WTC11 (cell line): ENCODE measurements at regions of chr5 and their contacts with region 1.

Region 1: DNA sequence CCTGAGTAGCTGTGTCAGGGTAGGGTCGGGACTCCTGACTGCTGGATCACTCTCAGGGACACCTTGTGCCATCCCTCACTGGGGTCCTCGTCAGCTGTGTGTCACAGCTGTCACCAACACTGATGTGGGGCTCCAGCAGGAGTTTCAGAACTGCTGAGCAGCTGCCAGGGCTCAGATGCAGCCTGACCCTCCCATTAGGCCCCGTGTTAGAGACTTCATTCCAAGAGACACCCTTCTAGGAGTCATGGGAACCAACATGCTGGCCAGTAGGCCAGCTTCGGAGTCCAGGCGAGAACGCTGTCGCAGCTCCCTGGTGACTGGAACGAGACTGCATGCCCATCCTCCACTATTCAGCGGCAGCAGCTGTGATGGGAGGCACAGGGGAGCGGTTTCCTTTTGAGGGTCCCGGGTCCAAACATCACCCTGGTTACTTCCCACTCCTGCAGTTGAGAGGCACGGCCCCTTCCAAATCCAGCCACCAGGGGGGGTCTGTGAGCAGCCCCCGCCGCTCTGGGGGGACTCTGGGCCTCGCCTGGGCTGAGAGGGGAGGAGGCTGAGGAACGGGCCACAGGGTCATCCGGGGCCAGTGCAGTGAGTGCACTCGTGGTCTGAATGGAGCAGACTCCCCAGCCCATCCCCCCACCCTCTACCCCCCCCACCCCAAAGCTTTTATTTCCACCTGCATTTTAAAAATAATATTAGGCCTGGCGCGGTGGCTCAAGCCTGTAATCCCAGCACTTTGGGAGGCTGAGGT is 12.6 kb upstream of the TCF7 start:
- DNase-seq: peak; percentile 87
- ATAC-seq: peak; percentile 73
- H3K4me3 Mint-ChIP-seq: no peak overlapping the region; the same call in 1 of the 2 replicates
- H3K27ac Mint-ChIP-seq: no peak overlapping the region
- H3K4me1 Mint-ChIP-seq: peaks cover 48% of the 10 kb centered on the region
- H3K27me3 Mint-ChIP-seq: peaks cover 52% of the 10 kb centered on the region
- CTCF ChIP-seq: peak; percentile 85

Region 2: DNA sequence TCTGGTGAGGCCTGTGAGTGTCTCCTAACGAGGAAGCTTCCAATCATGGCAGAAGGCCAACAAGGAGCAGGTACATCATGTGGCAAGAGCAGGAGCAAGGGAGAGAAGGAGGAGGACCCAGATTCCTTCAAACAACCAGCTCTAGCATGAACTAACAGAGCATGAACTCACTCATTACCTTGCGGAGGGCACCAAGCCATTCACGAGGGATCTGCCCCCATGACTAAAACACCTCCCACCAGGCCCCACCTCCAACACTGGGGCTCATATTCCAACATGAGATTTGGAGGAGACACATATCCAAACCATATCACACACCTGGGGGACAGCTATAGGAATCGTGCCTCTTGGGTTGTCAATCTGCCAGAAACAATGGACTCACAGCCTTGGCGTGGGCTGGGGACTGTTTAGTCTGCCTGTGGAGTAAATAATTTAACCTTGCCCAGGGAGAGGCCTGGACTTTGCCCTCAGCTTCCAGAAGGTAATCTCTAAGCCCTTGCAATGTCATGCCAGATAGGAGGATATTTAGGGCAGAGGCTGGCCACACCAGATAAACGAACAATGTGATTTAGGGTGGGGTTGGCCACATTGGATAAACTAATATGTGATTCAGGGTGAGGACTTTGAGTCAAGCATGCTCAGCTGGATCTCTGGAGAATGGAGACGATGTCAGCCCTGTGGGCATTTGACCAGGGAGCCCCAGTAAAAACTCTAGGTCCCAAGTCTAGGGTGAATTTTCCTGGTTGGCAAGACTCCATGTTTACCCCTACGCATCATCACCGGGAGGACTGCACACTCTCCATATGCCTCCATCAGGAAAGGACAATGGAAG is 83.5 kb before region 1 on chr5:
- CTCF ChIA-PET with region 1: no interaction called
- POLR2A ChIA-PET with region 1: no interaction called
- DNase-seq: no peak
- ATAC-seq: no peak
- H3K4me3 Mint-ChIP-seq: no peak overlapping the region
- H3K27ac Mint-ChIP-seq: no peak overlapping the region
- H3K4me1 Mint-ChIP-seq: peaks cover 10% of the 10 kb centered on the region
- H3K27me3 Mint-ChIP-seq: peaks cover 4% of the 10 kb centered on the region
- CTCF ChIP-seq: no peak

Region 3: DNA sequence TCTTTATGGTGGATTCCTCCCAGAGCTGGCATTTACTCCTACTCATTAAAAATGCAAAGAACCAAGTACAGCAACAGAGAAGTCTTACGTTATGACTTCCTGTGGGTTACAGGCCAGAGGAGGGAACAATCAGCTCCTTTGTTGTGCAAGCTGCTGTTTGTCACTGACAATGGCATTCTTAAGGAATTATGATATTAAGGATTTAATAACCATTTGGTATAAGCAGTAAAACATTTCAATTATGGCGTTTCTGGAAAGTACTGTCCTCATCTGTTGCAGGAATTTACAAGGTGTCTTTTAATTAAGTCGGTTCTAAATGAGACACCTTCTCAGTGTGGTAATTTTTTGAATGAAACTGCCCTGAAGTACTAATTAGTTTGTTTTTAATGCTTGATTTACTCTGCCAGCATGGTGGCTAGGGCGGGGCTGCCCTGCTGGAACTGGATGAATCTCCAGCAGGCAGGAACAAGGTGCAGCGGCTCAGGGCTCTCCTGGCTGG is 48.0 kb before region 1 on chr5:
- CTCF ChIA-PET with region 1: interaction called, 16 read pairs
- POLR2A ChIA-PET with region 1: no interaction called
- DNase-seq: no peak
- ATAC-seq: peak; percentile 28; the same call in 1 of the 2 replicates
- H3K4me3 Mint-ChIP-seq: no peak overlapping the region
- H3K27ac Mint-ChIP-seq: peak overlapping the region; percentile 32
- H3K4me1 Mint-ChIP-seq: peaks cover 46% of the 10 kb centered on the region
- H3K27me3 Mint-ChIP-seq: peaks cover 14% of the 10 kb centered on the region
- CTCF ChIP-seq: no peak

Region 4: GRCh38 chr5:134086943-134087305 is 14.9 kb before region 1 on chr5:
- CTCF ChIA-PET with region 1: interaction called, 13 read pairs
- POLR2A ChIA-PET with region 1: no interaction called
- DNase-seq: no peak
- ATAC-seq: no peak
- H3K4me3 Mint-ChIP-seq: no peak overlapping the region
- H3K27ac Mint-ChIP-seq: no peak overlapping the region
- H3K4me1 Mint-ChIP-seq: peaks cover 6% of the 10 kb centered on the region
- H3K27me3 Mint-ChIP-seq: peaks cover 4% of the 10 kb centered on the region; the same call in 1 of the 2 replicates
- CTCF ChIP-seq: no peak

Region 5: GRCh38 chr5:134113902-134114875 is 12.3 kb after region 1 on chr5 and contains the start of gene TCF7:
- CTCF ChIA-PET with region 1: interaction called, 30 read pairs
- POLR2A ChIA-PET with region 1: interaction called, 3 read pairs
- DNase-seq: peak; percentile 75
- ATAC-seq: peak; percentile 84
- H3K4me3 Mint-ChIP-seq: peak within 1 kb of the TSS; percentile 79
- H3K27ac Mint-ChIP-seq: peak within 1 kb of the TSS; percentile 80; the same call in 1 of the 2 replicates
- H3K4me1 Mint-ChIP-seq: peaks cover 11% of the 10 kb centered on the region
- H3K27me3 Mint-ChIP-seq: peaks cover 40% of the 10 kb centered on the region
- CTCF ChIP-seq: no peak
- total RNA-seq, gene TCF7: 8.9 to 11.3 TPM (median 9.6 TPM) in 3 replicates